Left cardiac atrium (tissue), 4 donors: ENCODE measurements at regions of chr3 and their contacts with region 1.

Region 1: DNA sequence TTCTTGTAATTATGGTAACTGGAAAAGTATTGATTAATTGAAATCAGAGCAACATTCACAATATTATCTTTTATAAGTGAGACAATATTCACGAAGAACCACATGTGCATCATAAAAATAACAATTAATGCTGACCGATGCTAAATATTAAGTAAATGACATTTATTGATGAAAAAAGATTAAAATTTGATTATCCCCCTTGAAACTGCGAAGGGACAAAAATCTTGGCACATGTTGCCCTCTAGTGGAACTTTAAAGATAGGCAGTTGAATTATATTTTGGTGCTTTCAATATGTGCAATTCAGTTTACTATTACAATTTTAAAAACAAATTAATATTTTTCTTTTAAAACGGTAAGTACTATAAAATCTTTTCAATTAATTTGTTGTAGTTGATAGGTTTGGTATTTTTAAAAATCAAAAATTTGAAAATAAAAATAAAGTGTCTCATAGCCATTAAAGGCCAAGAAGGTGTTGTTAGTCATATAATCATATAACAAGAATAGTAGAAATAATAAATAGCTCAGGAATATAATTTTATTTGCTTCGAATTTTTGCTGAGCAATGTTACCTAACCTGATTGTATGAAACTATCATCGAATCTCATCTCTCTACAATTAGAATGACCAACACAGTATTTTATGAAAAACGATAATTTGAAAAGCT is 270.2 kb downstream of the ROBO1 start:
- DNase-seq: no peak
- ATAC-seq: no peak

Region 2: DNA sequence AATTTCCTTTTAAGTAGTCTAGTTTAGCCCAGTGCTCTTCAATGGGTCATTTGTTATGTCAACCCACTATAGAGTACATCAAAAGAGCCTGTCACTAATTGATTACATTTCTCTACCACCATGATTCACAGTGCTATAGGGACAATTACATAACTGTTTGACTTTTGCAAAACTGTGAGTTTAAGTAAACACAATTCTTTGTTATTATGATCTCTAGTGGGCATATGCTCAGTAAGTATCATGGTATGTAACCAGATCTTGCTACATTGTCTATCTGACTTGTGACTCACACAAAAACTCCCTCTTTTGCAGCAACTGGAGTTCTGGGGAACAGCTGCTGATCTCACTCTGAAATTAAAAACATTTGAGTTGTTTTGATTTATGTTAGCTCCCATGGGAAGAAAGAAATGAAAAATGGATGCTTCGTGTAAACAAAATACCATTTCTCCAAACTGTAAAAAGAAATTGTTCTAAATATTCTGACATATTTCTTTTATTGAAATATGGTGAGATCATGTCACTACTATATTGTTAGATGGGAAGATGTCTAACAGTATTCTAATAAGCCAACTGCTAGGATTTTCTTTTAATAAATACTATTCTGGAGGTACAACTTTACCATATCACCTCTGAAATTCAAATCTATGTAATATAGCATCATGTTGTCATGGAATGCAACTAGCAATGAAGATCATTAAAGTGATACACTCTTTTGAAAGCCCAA is 200.2 kb before region 1 on chr3:
- intact Hi-C with region 1: no loop called
- DNase-seq: no peak
- ATAC-seq: no peak

Region 3: DNA sequence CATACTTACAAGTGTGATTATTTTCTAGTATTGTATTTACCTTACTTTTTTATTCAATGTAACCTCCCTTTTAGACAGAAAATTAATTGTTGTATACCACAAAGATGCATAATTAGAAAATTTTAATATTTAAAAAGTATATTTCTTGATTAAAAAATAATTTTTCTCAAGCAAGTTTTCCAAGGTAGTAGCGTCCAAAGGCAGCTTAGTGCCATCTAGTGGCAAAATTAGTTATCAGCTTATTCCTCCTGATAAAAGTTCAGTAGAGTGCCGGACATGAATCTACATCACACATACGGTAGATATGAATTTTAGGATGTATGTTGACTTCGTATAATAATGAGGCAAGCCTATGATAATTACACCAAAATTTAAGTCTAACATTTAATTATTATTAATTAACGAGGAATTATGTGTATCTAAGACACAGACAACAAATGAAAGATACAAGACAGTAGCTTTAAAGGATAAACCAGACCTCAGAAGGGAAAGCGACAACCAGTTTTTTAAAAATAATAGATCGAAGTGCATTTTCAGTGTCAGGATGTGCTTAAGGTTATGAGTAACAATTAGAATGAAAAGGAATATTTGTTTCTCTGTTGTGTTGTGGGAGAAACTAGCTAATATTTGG is 135.7 kb before region 1 on chr3:
- intact Hi-C with region 1: loop called in 1 of 2 experiments (anchors 5 kb)
- DNase-seq: no peak
- ATAC-seq: peak in 1 of 2 donors; percentile 50